Natural killer cell (primary cell): ENCODE measurements at regions of chr14 and their contacts with region 1.

Region 1: DNA sequence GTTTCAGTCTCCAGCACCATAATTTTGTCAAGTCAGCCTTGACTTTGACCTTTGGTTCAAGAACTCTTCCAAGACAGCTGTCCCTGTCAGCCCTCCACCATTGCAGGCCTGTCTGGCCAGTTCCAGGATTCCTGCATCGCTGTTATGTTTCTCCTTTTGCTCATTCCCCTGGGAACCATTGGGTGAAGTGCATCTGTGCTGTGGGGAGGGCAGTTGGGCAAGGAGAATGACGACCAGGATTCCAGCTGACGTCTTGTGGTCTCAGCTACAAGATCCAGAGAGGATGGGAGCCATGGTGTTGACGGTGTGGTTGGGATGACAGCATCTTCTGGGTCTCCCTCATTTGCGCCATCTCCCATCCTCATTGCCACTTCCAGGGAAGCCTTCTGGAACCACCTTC is 45.9 kb upstream of the SLC24A4 start:
- DNase-seq: no peak
- ATAC-seq: no peak
- H3K4me3 ChIP-seq: no peak overlapping the region
- H3K4me3 Mint-ChIP-seq: no peak overlapping the region
- H3K27ac ChIP-seq: no peak overlapping the region
- H3K27ac Mint-ChIP-seq: no peak overlapping the region
- H3K4me1 ChIP-seq: no peaks in the 10 kb centered on the region
- H3K4me1 Mint-ChIP-seq: peaks cover 4 to 6% of the 10 kb centered on the region in 2 donors
- H3K27me3 ChIP-seq: no peaks in the 10 kb centered on the region
- H3K27me3 Mint-ChIP-seq: peaks cover 0 to 3% of the 10 kb centered on the region in 2 donors
- CTCF ChIP-seq: no peak

Region 2: DNA sequence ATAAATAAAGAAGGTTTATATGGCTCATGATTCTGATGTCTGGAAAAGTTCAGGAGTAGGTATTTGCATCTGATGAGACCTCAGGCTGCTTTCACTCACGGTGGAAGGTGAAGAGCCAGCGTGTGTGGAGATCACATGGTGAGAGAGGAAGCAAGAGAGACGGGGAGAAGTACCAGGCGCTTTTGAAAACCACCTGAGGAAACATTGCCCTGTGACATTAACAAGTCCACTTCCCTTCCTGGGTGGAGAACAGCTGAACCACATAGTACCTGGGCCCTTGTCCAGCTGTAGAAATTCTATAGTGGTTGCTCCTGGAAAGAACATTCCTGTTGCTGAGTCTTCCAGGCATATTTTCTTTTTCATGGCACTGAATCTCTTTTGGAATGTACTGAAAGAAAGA is 149.2 kb after region 1 on chr14:
- intact Hi-C with region 1: loop called (anchors 5 kb)
- DNase-seq: peak in 1 of 2 donors; percentile 23
- ATAC-seq: peak in 2 of 3 donors; percentile 20 to 46
- H3K4me3 ChIP-seq: no peak overlapping the region
- H3K4me3 Mint-ChIP-seq: no peak overlapping the region
- H3K27ac ChIP-seq: no peak overlapping the region
- H3K27ac Mint-ChIP-seq: peak overlapping the region in 1 of 2 donors; percentile 57
- H3K4me1 ChIP-seq: peaks cover 4% of the 10 kb centered on the region
- H3K4me1 Mint-ChIP-seq: peaks cover 7 to 14% of the 10 kb centered on the region in 2 donors
- H3K27me3 ChIP-seq: no peaks in the 10 kb centered on the region
- H3K27me3 Mint-ChIP-seq: peaks cover 0 to 3% of the 10 kb centered on the region in 2 donors
- CTCF ChIP-seq: no peak